Activated CD4-positive, alpha-beta memory T cell treated with anti-CD3 and anti-CD28 coated beads, Interleukin-2, amount 10 ng/mL, durations not matched to agents 7 days and 5 days (primary cell): ENCODE measurements at regions of chr10 and their contacts with region 1.

Region 1: DNA sequence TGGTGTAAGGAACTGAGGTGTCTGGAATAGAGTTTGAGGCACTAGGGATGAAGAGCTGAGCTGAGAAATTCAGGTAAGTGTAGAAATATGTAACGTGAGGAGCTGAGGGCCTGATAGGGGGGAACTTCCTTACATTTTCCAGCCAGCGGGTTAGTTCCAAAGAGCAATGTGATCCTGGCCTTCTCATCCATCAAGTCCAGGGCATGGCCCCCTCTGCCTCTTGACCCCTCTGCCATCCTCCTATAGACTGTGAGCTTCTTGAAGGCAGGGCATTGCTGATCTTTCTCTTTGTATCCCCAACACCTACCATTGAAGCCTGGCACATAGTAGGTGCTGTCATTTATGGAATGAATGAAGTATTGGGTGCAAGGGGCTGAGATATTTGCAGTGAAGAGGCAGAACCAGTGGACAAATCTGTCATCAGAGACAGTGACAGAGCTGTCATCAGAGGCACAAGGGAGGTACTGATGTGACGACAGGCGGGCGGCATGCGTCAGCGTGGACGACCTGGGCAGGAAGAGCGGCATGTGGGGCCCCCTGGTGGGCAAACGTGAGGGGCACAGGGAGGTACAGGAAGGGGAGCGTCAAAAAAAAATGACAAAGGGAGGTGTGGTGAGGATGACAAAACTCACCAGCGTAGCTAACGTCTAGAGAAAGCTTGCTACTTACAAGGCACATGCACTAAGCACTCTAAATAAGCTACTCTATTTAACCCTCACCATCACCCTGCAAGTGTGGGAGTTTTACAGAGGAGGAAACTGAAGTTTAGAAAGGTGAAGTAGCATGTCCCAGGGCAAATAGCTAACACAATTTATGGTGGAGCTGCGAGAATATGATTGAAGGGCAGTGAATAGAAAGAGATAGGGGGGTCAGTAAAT is 5.2 kb upstream of the CAMK2G start:
- DNase-seq: peak; percentile 96
- H3K4me3 Mint-ChIP-seq: no peak overlapping the region
- H3K27ac Mint-ChIP-seq: peak overlapping the region; percentile 6
- H3K4me1 Mint-ChIP-seq: peaks cover 37% of the 10 kb centered on the region
- H3K27me3 Mint-ChIP-seq: peaks cover 5% of the 10 kb centered on the region

Region 2: DNA sequence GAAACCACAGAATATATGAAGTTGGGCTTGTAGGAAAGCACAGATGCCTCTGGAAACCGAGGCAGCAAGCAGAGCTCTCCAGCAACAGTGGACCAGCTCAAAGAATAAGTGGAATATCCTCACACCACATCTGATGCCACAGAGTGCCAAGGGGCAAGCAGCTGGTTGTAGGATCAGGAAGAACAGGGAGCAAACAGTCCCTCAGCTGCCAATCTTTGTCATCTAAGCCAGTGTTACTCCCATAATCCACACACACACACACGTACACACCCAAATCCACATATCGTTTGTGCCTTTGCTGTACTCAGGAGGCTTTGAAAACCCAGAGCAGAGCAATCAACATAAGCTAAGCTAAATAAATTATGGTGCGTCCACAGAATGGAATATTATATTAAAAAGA is 156.0 kb before region 1 on chr10:
- CTCF ChIA-PET with region 1: no interaction called
- POLR2A ChIA-PET with region 1: no interaction called
- DNase-seq: no peak
- H3K4me3 Mint-ChIP-seq: no peak overlapping the region
- H3K27ac Mint-ChIP-seq: no peak overlapping the region
- H3K4me1 Mint-ChIP-seq: peaks cover 5% of the 10 kb centered on the region
- H3K27me3 Mint-ChIP-seq: no peaks in the 10 kb centered on the region

Region 3: DNA sequence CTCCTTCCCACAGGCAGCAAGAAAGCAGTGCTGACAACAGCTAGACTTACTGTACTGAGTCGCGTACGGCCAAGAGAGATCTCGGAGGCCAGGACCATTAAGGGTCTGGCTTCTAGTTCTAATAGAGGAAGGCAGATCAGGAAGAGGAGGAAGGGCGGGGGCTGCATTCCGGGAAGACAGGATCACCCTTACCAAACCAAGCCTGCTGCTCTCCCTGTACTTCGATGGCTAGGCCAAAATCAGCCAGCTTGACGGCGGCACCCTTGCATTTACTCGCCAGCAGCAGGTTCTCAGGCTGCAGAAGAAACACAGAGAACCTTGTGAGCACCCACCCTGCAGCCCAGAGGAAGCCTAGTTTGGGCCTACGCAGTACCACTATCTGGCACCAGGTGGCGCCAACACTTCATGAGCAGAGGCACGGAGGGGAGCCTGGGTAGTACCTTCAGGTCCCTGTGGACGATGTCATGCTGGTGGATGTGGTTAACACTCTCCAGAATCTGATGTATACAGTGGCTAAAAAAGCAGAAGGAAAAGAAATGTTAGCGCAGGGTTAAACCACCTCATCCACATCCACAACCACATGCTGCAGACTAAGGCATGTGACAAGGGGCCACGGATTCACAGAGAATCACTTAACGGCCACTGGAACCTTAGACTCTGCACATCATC is 30.6 kb before region 1 on chr10:
- CTCF ChIA-PET with region 1: interaction called, 350 read pairs
- POLR2A ChIA-PET with region 1: interaction called, 55 read pairs
- DNase-seq: peak; percentile 94
- H3K4me3 Mint-ChIP-seq: no peak overlapping the region
- H3K27ac Mint-ChIP-seq: peak overlapping the region; percentile 56
- H3K4me1 Mint-ChIP-seq: peaks cover 22% of the 10 kb centered on the region
- H3K27me3 Mint-ChIP-seq: no peaks in the 10 kb centered on the region

Region 4: GRCh38 chr10:73894245-73894971 is 14.9 kb after region 1 on chr10:
- CTCF ChIA-PET with region 1: interaction called, 30 read pairs
- POLR2A ChIA-PET with region 1: interaction called, 3 read pairs
- DNase-seq: peak; percentile 40
- H3K4me3 Mint-ChIP-seq: no peak overlapping the region
- H3K27ac Mint-ChIP-seq: peak overlapping the region; percentile 21
- H3K4me1 Mint-ChIP-seq: peaks cover 15% of the 10 kb centered on the region
- H3K27me3 Mint-ChIP-seq: peaks cover 4% of the 10 kb centered on the region

Region 5: GRCh38 chr10:73940634-73941221 is 61.2 kb after region 1 on chr10:
- CTCF ChIA-PET with region 1: interaction called, 415 read pairs
- POLR2A ChIA-PET with region 1: interaction called, 7 read pairs
- DNase-seq: peak; percentile 88
- H3K4me3 Mint-ChIP-seq: peak overlapping the region; percentile 31
- H3K27ac Mint-ChIP-seq: no peak overlapping the region
- H3K4me1 Mint-ChIP-seq: peaks cover 26% of the 10 kb centered on the region
- H3K27me3 Mint-ChIP-seq: peaks cover 7% of the 10 kb centered on the region

Region 6: GRCh38 chr10:74081192-74081803 is 201.8 kb after region 1 on chr10:
- CTCF ChIA-PET with region 1: interaction called, 28 read pairs
- POLR2A ChIA-PET with region 1: interaction called, 3 read pairs
- DNase-seq: peak; percentile 45
- H3K4me3 Mint-ChIP-seq: no peak overlapping the region
- H3K27ac Mint-ChIP-seq: no peak overlapping the region
- H3K4me1 Mint-ChIP-seq: peaks cover 57% of the 10 kb centered on the region
- H3K27me3 Mint-ChIP-seq: no peaks in the 10 kb centered on the region